Activated CD4-positive, alpha-beta T cell treated with anti-CD3 and anti-CD28 coated beads, Interleukin-2, amount 10 ng/mL, durations not matched to agents 24 days and 14 days (primary cell): ENCODE measurements at regions of chr14 and their contacts with region 1.

Region 1: DNA sequence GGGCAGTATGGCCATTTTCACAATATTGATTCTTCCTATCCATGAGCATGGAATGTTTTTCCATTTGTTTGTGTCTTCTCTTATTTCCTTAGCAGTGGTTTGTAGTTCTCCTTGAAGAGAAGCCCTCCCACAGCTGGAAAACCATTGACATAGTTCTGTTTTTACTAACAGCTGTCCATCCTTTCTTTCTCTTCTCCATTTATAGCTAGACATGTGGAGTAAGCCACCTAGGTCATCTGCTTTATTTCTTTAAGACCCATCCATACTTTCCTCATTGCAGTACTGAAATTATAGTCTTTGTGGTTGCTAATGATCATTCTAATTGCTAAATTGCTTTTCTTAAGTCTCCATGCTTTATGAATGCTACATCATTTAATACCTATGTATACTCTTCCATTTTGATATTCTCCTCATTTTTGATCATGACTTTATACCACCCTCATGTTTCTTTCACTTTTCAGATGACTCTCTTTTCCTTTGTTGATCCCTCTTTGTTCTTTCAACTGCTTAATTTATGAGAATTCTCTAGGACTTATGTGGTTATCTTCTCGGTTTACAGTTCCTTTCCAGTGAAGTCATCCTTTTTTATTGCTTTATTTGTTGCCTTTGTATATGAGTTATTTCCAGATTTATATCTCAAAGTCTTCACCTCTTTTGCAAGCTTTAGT is 114.2 kb downstream of the PCNX1 start:
- DNase-seq: no peak
- H3K4me3 Mint-ChIP-seq: peak overlapping the region; percentile 6
- H3K27ac Mint-ChIP-seq: peak overlapping the region; percentile 85
- H3K4me1 Mint-ChIP-seq: peaks cover 24% of the 10 kb centered on the region
- H3K27me3 Mint-ChIP-seq: no peaks in the 10 kb centered on the region

Region 2: DNA sequence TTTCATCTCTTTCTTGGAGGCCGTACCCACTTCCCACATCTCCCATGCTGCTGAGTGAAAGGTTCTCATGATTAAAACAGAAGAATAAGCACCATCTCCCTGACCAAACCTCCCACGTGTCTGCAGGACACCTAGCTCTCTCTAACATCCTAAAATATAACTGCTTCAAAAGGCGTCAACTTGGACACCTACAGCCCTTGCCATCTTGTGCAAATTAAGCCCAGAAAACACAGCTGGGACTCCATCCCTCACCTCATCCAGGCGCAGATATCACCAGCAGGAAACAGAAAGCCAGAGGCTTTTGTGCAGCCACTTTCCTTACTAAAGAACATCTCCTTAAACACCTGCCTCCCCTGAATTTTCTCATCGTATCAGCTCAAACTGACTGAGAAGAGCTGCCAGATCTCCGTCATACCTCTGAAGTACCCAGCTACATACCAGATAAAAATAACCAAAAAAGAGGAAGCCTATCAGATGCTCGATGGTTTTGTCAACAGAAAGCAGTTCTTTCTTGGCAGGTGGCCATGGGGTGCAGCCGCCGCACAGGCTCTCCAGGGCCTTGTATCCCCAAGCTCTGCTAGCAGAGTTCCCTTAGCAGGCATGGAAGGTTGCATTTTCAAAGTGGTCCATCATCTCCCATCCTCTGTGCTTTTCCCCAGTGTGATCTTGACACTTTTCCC is 240.9 kb before region 1 on chr14:
- intact Hi-C with region 1: no loop called
- DNase-seq: no peak
- H3K4me3 Mint-ChIP-seq: no peak overlapping the region
- H3K27ac Mint-ChIP-seq: no peak overlapping the region
- H3K4me1 Mint-ChIP-seq: peaks cover 8% of the 10 kb centered on the region
- H3K27me3 Mint-ChIP-seq: no peaks in the 10 kb centered on the region

Region 3: DNA sequence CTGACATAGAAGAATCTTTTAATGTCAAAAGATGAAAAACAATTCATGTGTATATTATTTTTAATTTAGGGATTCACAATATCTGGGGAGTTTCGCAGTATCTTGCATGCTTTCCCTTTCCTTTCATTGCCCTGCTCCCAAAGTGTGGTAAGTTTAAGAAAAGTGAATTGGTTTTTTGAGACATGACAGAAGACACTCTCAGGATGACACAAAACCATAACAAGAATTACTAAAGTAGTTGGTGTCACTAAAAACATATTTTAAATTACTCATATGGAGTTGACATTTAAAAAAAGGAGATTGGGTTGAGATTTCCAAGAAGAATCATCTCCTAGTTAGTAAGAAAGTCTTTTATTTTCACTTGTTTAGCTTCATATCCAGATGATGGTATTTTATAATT is 119.3 kb before region 1 on chr14:
- intact Hi-C with region 1: loop called (anchors 2 kb)
- DNase-seq: no peak
- H3K4me3 Mint-ChIP-seq: no peak overlapping the region
- H3K27ac Mint-ChIP-seq: no peak overlapping the region
- H3K4me1 Mint-ChIP-seq: peaks cover 52% of the 10 kb centered on the region
- H3K27me3 Mint-ChIP-seq: no peaks in the 10 kb centered on the region

Region 4: GRCh38 chr14:71703477-71703876 is 682.0 kb after region 1 on chr14:
- intact Hi-C with region 1: no loop called
- DNase-seq: no peak
- H3K4me3 Mint-ChIP-seq: no peak overlapping the region
- H3K27ac Mint-ChIP-seq: no peak overlapping the region
- H3K4me1 Mint-ChIP-seq: peaks cover 21% of the 10 kb centered on the region
- H3K27me3 Mint-ChIP-seq: no peaks in the 10 kb centered on the region